CD8-positive, alpha-beta memory T cell (primary cell): ENCODE measurements at regions of chr17 and their contacts with region 1.

Region 1: GRCh38 chr17:1323336-1323735 is 43.9 kb downstream of the TRARG1 start:
- DNase-seq: no peak
- H3K4me3 ChIP-seq: no peak overlapping the region
- H3K4me3 Mint-ChIP-seq: no peak overlapping the region
- H3K27ac ChIP-seq: no peak overlapping the region
- H3K27ac Mint-ChIP-seq: peak overlapping the region in 1 of 8 donors; percentile 46
- H3K4me1 ChIP-seq: no peaks in the 10 kb centered on the region
- H3K4me1 Mint-ChIP-seq: peaks cover 0 to 6% (median 0%) of the 10 kb centered on the region in 3 donors
- H3K27me3 ChIP-seq: no peaks in the 10 kb centered on the region
- H3K27me3 Mint-ChIP-seq: peaks cover 18 to 23% of the 10 kb centered on the region in 2 donors

Region 2: DNA sequence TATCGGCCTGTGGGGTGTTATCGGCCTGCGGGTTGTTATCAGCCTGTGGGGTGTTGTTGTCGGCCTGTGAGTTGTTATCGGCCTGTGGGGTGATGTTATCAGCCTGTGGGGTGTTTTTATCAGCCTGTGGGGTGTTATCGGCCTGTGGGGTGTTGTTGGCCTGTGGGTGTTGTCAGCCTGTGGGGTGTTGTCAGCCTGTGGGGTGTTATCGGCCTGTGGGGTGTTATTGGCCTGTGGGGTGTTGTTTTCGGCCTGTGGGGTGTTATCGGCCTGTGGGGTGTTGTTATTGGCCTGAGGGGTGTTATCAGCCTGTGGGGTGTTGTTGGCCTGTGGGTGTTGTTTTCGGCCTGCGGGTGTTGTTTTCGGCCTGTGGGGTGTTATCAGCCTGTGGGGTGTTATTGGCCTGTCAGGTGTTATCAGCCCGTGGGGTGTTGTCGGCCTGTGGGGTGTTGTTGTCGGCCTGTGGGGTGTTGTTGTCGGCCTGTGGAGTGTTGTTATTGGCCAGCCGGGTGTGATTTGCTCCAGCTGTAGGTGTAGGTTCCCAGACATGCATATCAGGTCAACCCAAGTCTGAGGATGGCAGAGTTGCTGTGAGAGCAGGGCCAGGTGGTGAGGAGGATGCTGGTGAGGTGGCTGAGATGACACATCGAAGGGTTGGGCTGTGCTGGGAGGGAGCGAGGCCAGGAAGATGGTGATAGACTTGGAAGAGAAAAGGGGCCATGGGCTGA is 36.8 kb before region 1 on chr17:
- CTCF ChIA-PET with region 1: no interaction called
- POLR2A ChIA-PET with region 1: interaction called, 11 read pairs
- DNase-seq: no peak
- H3K4me3 ChIP-seq: no peak overlapping the region
- H3K4me3 Mint-ChIP-seq: peak overlapping the region in 2 of 7 donors; percentile 13 to 17
- H3K27ac ChIP-seq: no peak overlapping the region
- H3K27ac Mint-ChIP-seq: peak overlapping the region in 3 of 8 donors; percentile 7 to 61 (median 54)
- H3K4me1 ChIP-seq: no peaks in the 10 kb centered on the region
- H3K4me1 Mint-ChIP-seq: peaks cover 5 to 26% (median 13%) of the 10 kb centered on the region in 3 donors
- H3K27me3 ChIP-seq: no peaks in the 10 kb centered on the region
- H3K27me3 Mint-ChIP-seq: peaks cover 0 to 1% of the 10 kb centered on the region in 2 donors